A549 (cell line): ENCODE measurements at regions of chr9 and their contacts with region 1.

Region 1: GRCh38 chr9:133440874-133441273 is 18.7 kb downstream of the ADAMTS13 start:
- DNase-seq: no peak
- ATAC-seq: no peak
- H3K4me3 ChIP-seq: no peak overlapping the region
- H3K27ac ChIP-seq: no peak overlapping the region
- H3K4me1 ChIP-seq: no peaks in the 10 kb centered on the region
- CTCF ChIP-seq: no peak
- EP300 ChIP-seq: no peak
- POLR2A ChIP-seq: no peak
- RAD21 ChIP-seq: no peak

Region 2: GRCh38 chr9:133429641-133430161 is 11.2 kb before region 1 on chr9:
- CTCF ChIA-PET with region 1: interaction called, 13 read pairs
- POLR2A ChIA-PET with region 1: no interaction called
- DNase-seq: peak; percentile 60 to 88
- ATAC-seq: peak; percentile 68 to 87; a peak in 5 of 6 replicates
- H3K4me3 ChIP-seq: no peak overlapping the region
- H3K27ac ChIP-seq: no peak overlapping the region
- H3K4me1 ChIP-seq: peaks cover 6% of the 10 kb centered on the region; the same call in 1 of the 3 replicates
- CTCF ChIP-seq: peak; percentile 19; the same call in 2 of the 3 replicates
- EP300 ChIP-seq: no peak
- POLR2A ChIP-seq: no peak
- RAD21 ChIP-seq: peak in 1 of 2 experiments; percentile 17; a peak in 1 of 5 replicates